Cardiac septum (tissue), 1 donor: ENCODE measurements at regions of chr2 and their contacts with region 1.

Region 1: DNA sequence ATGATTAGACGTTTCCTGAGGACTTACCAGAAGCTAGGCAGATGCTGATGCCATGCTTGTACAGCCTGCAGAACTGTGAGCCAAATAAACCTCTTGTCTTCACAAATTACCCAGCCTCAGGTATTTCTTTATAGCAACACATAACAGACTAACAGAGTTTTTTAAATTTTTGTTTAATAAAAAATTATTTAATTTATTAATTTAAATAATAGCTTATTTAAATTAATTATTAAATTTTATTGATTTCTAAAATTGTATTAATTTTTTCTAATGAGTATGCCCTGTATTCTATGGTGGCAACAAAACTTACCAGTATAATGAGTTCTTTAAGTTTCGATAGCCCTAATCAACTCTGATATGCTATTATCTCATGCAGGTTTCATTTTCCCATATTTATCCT is 259.8 kb downstream of the IKZF2 start:
- DNase-seq: no peak

Region 2: DNA sequence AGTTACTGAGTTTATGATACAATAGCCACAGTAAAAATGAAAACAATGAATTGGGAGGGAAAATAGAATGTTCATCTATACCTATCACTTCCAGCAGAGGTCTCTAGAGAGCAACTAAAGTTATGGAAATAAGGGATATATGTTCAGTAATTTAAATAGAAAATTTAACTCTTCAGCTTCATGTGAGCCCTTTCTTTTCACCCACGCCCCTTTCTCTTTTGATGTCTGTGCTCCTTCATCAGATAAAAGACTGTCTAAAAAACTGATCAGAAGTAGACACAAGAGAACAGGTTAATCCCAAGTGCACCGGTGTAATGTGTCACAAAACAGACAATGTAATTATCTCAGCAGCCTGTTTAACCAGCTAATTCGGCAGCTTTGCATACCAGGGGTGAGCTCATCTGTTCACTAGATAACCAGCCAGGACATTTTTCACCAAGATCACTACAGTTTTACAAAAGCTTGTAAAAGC is 114.5 kb before region 1 on chr2:
- intact Hi-C with region 1: loop called (anchors 2 kb)
- DNase-seq: no peak

Region 3: DNA sequence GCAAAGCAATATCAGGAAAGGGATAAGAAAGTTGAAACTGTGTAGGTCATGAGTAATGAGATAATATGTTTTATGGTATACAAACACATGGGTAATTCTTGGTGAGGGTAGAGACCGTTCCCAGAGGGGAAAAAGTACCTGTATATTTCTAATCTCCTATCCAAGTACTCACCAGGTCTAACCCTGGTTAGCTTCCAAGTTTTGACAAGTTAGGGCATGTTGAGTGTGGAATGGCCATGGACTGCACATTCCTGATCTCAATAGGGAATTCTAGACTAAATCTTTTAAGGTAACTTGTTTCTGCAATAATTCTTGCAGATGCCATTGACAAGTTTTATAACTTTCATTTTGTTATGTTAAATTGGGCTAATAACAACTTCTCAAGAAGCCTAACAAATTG is 609.3 kb after region 1 on chr2:
- intact Hi-C with region 1: no loop called
- DNase-seq: no peak